Calu3 (cell line): ENCODE measurements at regions of chr2 and their contacts with region 1.

Region 1: DNA sequence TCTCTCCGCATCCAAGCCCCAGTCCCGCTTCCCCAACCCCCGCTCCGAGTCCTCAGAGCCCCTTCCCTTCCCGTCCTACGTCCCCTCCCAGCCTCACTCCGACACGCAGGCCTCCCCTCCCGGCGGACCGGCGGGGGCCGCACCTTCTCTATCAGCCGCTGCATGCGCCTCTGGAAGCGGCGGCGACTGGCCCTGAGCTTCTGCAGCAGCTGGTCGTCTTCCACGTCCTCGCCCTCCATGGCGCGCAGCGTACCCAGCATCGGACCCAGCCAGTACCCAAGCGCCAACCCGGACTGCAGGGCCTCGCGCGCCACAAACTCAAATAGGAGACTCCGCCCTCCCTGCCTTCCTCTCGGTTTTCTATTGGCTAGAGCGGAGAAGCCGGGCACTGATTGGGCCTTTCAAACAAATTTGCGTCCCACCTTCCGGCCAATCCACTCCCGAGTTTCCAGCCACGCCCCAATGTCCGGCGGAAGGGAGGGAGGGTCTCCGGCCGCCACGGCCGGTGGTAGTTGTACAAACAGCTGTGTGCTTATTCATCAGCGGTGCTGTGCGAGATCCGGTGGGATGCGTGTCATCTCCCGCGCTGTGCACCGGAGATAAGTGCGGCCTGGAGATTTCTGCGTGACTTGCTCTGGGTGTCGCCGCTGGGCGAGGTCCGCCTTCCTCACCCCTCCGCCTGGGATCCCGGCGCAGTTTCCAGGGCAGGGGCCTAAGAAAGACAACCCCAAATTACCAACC is at the start of gene HJURP:
- DNase-seq: peak; percentile 94
- H3K4me3 Mint-ChIP-seq: peak within 1 kb of the TSS; percentile 90
- H3K27ac Mint-ChIP-seq: peak within 1 kb of the TSS; percentile 88
- H3K4me1 Mint-ChIP-seq: peaks cover 27% of the 10 kb centered on the region
- H3K27me3 Mint-ChIP-seq: no peaks in the 10 kb centered on the region
- CTCF ChIP-seq: no peak
- total RNA-seq, gene HJURP: 58.5 and 71.0 TPM in 2 replicates

Region 2: DNA sequence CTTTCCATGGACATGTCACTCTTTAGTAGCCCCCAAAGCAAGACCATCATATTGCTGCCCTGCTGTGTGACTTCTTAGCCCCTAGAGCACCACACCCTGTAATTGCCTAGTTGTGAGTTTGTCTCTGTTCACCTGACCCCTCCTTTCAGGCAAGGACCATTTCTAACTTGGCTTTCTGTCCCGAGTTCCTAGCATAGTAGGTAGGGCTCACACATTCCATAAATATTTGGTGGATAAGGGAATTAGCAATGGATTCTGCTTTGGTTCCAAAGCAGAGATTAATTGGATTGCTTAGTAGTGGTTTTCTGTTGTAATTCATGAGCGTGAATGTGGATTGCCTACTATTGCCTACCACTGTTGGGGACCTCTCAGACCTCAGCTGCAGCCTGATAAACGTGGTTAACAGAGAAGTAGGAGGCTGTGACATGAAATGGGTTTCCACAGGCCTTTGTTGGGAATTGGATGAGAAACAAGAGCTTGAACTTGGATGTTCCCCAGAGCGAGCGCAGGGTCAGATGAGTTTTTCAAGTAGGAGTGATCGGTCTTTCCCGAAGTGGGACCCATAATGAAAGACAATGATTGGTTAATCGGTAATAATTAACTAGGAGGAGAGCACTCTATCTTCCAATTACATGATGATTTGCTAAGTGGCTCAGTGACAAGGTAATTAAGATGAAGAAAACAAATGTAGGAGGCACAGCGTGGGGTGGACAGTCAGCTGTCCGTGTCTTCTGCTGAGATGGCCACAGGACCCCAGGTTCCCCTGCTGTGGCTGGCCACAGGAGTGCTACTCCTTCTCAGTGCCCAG is 107.7 kb before region 1 on chr2:
- CTCF ChIA-PET with region 1: no interaction called
- intact Hi-C with region 1: no loop called
- DNase-seq: no peak
- H3K4me3 Mint-ChIP-seq: no peak overlapping the region
- H3K27ac Mint-ChIP-seq: peak overlapping the region; percentile 13
- H3K4me1 Mint-ChIP-seq: peaks cover 32% of the 10 kb centered on the region
- H3K27me3 Mint-ChIP-seq: no peaks in the 10 kb centered on the region
- CTCF ChIP-seq: no peak

Region 3: DNA sequence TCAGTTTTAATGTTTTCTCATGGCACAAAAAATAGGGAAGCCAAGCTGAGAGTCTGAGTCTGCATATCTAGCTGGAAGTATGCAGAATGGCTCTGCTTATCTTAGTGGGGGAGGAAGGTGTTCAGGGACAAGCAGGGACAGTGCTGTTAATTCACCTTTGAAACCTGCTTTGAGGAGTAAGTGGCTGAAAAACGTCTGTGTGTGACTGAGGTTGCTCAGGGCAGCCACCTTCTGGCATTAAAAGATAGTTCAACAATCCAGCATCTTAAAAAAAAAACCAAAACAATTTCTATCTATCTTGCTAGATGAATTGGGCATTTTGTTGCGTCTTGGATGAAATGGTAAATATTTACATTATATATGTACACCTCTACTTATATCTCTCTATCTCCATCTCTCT is 60.7 kb after region 1 on chr2:
- CTCF ChIA-PET with region 1: interaction called, 4 read pairs
- intact Hi-C with region 1: loop called (anchors 1 kb)
- DNase-seq: no peak
- H3K4me3 Mint-ChIP-seq: no peak overlapping the region
- H3K27ac Mint-ChIP-seq: no peak overlapping the region
- H3K4me1 Mint-ChIP-seq: no peaks in the 10 kb centered on the region
- H3K27me3 Mint-ChIP-seq: peaks cover 68% of the 10 kb centered on the region
- CTCF ChIP-seq: no peak

Region 4: DNA sequence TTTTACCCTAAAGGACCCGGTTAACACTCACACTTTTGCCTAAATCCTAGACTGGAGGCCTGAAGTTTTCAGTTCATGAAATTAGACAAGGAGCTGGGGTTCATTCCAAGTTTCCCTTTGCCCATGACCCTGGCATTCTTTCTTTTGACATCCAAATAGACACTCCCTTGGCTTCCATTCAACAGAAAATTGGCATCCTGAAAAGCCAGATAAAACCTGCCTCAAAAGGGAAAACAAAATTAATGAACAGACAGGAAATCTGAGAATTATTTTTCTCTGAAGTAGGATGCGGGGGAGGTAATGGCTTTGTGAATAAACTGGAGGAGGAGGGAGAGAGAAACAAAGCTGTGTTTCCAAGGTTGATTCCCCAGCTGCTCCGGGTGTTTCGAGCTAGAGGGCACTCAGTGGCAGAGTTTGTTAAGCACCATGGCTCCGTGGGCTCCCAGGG is 237.0 kb after region 1 on chr2:
- CTCF ChIA-PET with region 1: no interaction called
- intact Hi-C with region 1: loop called (anchors 10 kb)
- DNase-seq: peak; percentile 55
- H3K4me3 Mint-ChIP-seq: peak overlapping the region; percentile 53
- H3K27ac Mint-ChIP-seq: peak overlapping the region; percentile 92
- H3K4me1 Mint-ChIP-seq: peaks cover 44% of the 10 kb centered on the region
- H3K27me3 Mint-ChIP-seq: no peaks in the 10 kb centered on the region
- CTCF ChIP-seq: no peak

Region 5: DNA sequence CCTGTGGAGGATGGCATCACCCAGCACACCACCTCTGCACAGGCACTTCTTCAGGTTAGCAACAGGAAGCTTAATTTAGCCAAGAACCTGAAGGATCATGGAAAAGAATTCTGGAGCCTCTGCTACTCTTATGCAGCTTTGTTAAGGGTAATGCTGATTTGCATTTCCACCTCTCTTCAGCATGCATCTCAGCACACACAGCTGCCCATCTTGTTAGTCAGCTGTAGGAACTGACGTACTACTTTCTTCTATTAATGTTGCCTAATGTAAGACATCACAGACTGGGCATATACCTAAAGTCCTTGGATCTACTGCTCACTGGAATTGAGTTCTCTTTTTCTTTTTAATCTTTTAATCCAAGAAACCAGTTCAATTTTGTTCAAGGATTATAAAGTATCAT is 377.0 kb after region 1 on chr2:
- CTCF ChIA-PET with region 1: no interaction called
- intact Hi-C with region 1: no loop called
- DNase-seq: no peak
- H3K4me3 Mint-ChIP-seq: no peak overlapping the region
- H3K27ac Mint-ChIP-seq: no peak overlapping the region
- H3K4me1 Mint-ChIP-seq: no peaks in the 10 kb centered on the region
- H3K27me3 Mint-ChIP-seq: no peaks in the 10 kb centered on the region
- CTCF ChIP-seq: no peak

Region 6: DNA sequence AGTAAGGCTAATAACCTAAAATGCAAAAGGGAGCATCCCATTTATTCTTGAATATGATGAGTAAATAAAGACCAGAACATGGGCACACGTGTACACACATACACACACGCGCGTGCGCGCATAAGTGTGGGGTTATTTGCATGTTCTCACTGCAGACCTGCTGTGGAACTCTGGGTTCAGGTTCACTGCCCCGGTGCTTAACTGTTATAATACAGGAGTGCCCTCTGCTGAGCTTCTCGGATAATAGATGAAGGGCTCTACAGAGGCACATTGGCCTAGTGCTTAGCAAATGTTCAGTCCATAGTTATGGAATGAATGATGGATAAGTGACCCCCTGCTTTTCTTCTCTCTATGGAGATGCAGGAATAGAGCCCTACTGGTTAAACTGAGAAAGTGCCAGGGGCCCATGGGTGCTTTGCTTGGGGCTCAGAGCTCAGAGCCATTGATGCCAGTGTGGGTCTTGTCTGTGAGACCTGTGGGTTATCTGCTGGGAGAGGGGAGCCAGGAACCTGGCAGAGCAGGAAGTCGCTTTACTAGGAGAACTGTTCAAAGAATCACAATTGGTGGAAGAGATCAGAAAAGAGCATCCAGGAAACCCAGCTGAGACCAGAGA is 646.1 kb after region 1 on chr2:
- CTCF ChIA-PET with region 1: no interaction called
- intact Hi-C with region 1: loop called (anchors 5 kb)
- DNase-seq: peak; percentile 42
- H3K4me3 Mint-ChIP-seq: no peak overlapping the region
- H3K27ac Mint-ChIP-seq: no peak overlapping the region
- H3K4me1 Mint-ChIP-seq: peaks cover 32% of the 10 kb centered on the region
- H3K27me3 Mint-ChIP-seq: no peaks in the 10 kb centered on the region
- CTCF ChIP-seq: peak; percentile 42

Region 7: GRCh38 chr2:234544659-234545611 is 690.5 kb after region 1 on chr2:
- CTCF ChIA-PET with region 1: interaction called, 16 read pairs
- intact Hi-C with region 1: loop called (anchors 5 kb)
- DNase-seq: peak; percentile 85
- H3K4me3 Mint-ChIP-seq: no peak overlapping the region
- H3K27ac Mint-ChIP-seq: no peak overlapping the region
- H3K4me1 Mint-ChIP-seq: peaks cover 9% of the 10 kb centered on the region
- H3K27me3 Mint-ChIP-seq: peaks cover 39% of the 10 kb centered on the region
- CTCF ChIP-seq: peak; percentile 94